ENCODE measurements at regions of chr3 and their contacts with region 1.

Region 1: GRCh38 chr3:131026321-131027178 is at the starts of genes ASTE1 and NEK11:
- DNase-seq: peak; percentile 34
- H3K4me3 ChIP-seq: peak within 1 kb of the TSS; percentile 89
- H3K27ac ChIP-seq: peak within 1 kb of the TSS; percentile 74
- H3K27me3 ChIP-seq: no peaks in the 10 kb centered on the region
- CTCF ChIP-seq: no peak
- polyA plus RNA-seq, gene ASTE1: 6.4 and 8.5 TPM in 2 replicates
- polyA plus RNA-seq, gene NEK11: 3.2 and 4.0 TPM in 2 replicates

Region 2: DNA sequence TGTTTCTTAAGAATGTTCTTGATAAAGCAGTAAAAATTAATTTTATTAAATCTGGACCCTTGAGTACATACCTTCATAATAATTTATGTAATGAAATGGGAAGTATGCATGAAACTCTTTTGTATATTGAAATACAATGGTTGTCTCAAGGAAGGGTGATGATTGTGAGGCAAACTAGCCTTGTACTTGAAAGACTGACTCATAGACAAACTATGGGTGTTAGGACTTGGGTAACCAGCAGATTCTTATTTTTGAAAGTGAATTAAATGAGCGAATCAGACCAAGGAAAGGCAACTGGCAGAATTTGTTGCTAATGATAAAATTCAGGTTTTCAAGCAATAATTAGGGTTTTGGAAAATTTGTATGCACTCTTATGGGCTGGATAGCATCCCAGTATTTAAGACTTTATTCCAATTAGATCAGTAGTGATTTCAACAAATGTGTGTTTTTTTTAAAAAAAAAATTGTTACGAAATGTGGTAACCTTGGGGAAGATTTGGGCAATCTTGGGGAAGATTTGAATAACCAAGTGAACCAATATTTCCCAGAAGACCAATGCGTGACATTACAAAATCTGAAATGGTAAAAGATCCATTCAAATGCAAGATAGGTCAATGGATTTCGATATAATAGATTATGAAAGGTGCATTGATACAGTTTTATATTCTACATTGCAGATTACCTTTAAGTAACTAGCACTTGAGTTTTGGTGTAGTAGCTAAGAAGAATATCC is 90.6 kb before region 1 on chr3:
- CTCF ChIA-PET with region 1: no interaction called
- POLR2A ChIA-PET with region 1: no interaction called
- DNase-seq: no peak
- H3K4me3 ChIP-seq: no peak overlapping the region
- H3K27ac ChIP-seq: no peak overlapping the region
- H3K27me3 ChIP-seq: no peaks in the 10 kb centered on the region
- CTCF ChIP-seq: no peak

Region 3: GRCh38 chr3:131053043-131053859 is 26.7 kb after region 1 on chr3:
- CTCF ChIA-PET with region 1: no interaction called
- POLR2A ChIA-PET with region 1: no interaction called
- DNase-seq: no peak
- H3K4me3 ChIP-seq: no peak overlapping the region
- H3K27ac ChIP-seq: no peak overlapping the region
- H3K27me3 ChIP-seq: no peaks in the 10 kb centered on the region
- CTCF ChIP-seq: peak; percentile 28; the same call in 1 of the 2 replicates

Region 4: GRCh38 chr3:131082871-131083863 is 56.6 kb after region 1 on chr3:
- CTCF ChIA-PET with region 1: no interaction called
- POLR2A ChIA-PET with region 1: no interaction called
- DNase-seq: no peak
- H3K4me3 ChIP-seq: no peak overlapping the region
- H3K27ac ChIP-seq: no peak overlapping the region
- H3K27me3 ChIP-seq: no peaks in the 10 kb centered on the region
- CTCF ChIP-seq: no peak

Region 5: DNA sequence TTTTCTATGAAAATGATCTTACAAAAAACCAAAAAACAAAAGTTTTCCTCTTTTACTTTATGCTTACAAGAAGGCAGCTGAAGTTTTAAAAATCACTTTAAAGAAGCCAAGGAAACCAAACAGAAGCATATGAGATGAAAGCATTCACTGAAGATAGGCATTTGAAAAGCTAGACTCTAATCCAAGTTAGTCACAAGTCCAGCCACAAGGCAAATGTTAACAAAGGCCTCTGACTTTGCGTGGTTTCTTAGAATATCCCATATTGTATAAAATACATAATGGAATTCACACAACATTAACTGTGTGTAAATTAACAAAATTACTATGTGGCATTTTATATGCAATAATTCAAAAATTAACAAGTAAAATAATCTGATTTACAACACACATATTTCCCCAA is 458.6 kb after region 1 on chr3:
- CTCF ChIA-PET with region 1: no interaction called
- POLR2A ChIA-PET with region 1: no interaction called
- DNase-seq: no peak
- H3K4me3 ChIP-seq: no peak overlapping the region
- H3K27ac ChIP-seq: no peak overlapping the region
- H3K27me3 ChIP-seq: no peaks in the 10 kb centered on the region
- CTCF ChIP-seq: no peak

Region 6: DNA sequence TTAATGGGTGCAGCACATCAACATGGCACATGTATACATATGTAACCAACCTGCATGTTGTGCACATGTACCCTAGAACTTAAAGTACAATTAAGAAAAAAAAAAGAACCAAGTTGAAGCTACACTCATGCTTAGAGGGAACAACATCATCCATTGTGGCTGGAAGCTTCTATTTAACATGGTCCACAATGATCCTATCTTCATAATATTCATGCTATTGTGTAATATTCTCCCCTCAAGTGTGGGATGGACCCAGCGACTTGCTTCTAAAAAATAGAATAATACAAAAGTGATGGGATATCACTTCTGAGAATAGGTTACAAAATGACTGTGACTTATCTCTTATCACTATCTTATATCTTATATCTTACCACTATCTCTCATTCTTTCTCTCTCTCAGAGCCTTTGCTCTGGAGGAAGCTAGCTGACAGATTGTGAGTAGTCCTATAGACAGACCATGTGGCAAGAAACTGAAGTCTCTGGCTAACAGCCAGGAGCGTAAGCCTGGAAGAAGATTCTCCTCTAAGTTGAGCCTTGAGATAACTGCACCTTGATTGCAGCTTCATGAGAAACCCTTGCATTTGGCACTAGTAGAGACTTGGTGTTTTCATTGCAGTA is 674.7 kb after region 1 on chr3:
- CTCF ChIA-PET with region 1: no interaction called
- POLR2A ChIA-PET with region 1: interaction called, 10 read pairs
- DNase-seq: no peak
- H3K4me3 ChIP-seq: no peak overlapping the region
- H3K27ac ChIP-seq: no peak overlapping the region
- H3K27me3 ChIP-seq: no peaks in the 10 kb centered on the region
- CTCF ChIP-seq: no peak

Measured in AG04450 (cell line).